ENCODE measurements at regions of chr1 and their contacts with region 1.

Region 1: GRCh38 chr1:27662707-27663393 is 9.1 kb downstream of the IFI6 start:
- DNase-seq: peak; percentile 92
- H3K4me3 ChIP-seq: peak overlapping the region; percentile 54
- H3K27ac ChIP-seq: peak overlapping the region; percentile 85
- H3K4me1 ChIP-seq: peaks cover 54% of the 10 kb centered on the region
- CTCF ChIP-seq: peak; percentile 94

Region 2: DNA sequence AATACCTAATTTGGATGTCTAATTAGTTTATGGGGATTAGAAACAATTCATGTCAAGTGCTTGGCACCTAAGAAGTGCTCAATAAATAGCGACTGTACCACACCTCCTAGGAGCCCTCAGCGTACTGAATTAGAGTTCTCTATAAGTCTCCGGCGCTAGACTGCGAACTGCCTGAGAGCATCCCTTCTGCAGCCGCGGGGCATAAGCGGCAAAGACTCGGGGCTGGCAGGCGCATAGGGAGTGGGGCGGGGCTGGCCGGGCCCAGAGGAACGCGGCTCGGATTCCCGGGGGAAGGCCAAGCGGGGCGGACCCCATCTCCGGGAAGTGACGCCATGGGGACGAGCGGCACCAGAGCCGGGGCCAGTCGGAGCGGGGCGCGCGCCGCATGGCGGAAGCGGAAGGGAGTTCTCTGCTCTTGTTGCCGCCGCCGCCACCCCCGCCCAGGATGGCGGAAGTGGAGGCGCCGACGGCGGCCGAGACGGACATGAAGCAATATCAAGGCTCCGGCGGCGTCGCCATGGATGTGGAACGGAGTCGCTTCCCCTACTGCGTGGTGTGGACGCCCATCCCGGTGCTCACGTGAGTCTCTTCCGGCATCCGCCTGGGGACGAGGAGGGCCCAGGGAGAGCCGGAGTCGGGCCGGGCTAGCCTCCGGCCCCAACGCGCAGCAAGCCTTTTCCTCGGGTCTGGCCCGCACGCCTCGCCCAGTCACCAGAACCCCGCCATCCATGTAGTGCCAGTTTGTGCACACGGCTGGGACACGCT is 340.9 kb before region 1 on chr1 and contains the start of gene TMEM222:
- CTCF ChIA-PET with region 1: no interaction called
- POLR2A ChIA-PET with region 1: interaction called, 8 read pairs
- intact Hi-C with region 1: loop called (anchors 10 kb)
- DNase-seq: peak; percentile 98
- H3K4me3 ChIP-seq: peak within 1 kb of the TSS; percentile 98
- H3K27ac ChIP-seq: peak within 1 kb of the TSS; percentile 75
- H3K4me1 ChIP-seq: peaks cover 10% of the 10 kb centered on the region
- CTCF ChIP-seq: no peak
- total RNA-seq, gene TMEM222: 32.8 and 43.4 TPM in 2 replicates

Region 3: DNA sequence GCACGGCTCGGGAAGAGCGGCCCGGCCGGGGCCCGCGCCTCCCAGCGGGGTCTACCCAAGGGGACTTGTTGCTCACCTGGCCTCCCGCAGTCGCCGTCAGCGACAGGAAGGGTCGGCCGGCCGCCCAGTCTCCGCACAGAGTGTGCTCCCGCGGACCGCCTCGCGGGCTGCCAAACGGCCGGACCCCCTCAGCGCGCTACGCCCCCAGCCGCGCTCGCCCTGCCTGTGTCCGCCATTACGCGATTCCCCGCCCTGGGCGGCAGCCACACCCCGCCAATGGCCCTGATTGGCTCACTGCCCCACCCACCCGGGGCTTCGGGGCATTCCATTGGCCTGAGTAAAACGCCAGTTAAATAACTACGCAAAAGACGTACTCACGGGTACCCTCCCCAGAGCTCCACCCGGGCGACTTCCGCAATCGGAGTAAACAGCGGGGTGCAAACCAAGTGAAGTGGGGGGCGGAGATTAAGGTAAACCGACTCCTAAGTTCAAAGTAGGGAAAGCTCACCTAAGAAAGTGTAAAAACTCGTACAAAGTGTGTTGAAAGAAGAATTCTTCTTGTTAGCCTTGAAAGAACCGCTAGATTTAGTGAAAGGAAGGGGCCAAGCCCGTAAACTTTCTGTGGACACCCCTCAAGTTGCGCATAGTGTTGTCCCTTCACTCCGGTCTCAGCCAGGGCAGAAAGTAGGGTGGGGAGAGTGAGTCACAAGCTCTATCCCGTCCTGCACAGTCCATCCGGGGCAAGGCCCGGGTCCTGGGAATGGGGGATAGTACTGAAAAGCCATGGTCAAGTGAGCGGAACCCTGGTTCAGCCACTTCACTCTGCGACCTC is 172.7 kb before region 1 on chr1 and contains the start of gene WASF2:
- CTCF ChIA-PET with region 1: no interaction called
- POLR2A ChIA-PET with region 1: no interaction called
- intact Hi-C with region 1: no loop called
- DNase-seq: peak; percentile 100
- H3K4me3 ChIP-seq: peak within 1 kb of the TSS; percentile 95
- H3K27ac ChIP-seq: peak within 1 kb of the TSS; percentile 76
- H3K4me1 ChIP-seq: peaks cover 46% of the 10 kb centered on the region
- CTCF ChIP-seq: no peak
- total RNA-seq, gene WASF2: 25.1 and 26.9 TPM in 2 replicates

Region 4: DNA sequence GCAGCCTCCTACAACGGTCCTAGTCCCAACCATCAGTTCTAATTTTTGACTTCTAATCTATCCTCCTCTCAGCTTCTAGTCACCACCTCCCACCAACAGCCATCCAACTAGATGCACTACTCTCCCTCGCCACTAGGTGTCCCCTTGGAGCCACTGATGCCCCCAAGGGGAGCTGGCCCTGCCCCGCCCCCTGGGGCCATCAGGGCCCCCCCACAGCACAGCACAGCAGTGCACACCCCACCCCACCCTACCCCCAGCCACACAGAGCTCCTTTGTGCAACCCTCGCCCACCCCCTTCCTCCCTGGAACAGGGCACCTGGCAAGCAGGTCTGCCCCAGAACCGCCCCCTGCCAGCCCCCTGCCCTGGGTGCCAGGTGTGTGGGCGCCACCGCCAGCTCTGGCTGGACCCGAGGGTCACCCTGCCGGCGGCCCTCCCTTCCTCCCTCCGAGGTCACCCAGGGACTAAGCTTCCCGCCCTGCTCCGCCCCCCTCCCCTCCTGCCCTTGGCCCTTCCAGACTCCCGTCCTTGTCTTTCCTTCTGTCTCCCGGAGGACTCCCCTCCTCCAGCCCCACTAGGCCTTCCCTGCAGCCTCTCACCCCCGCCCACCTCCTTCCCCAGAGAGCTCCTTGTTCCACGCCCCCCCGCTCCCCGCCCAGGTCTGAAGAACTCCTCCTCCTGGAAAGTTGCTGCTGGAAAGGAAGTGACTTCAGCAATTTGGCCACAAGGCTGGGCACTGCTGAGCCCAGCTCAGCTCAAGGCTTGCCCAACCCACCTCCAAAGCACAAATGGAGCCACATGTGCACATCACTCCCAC is 105.9 kb before region 1 on chr1:
- CTCF ChIA-PET with region 1: interaction called, 3 read pairs
- POLR2A ChIA-PET with region 1: no interaction called
- intact Hi-C with region 1: loop called (anchors 2 kb)
- DNase-seq: peak; percentile 77
- H3K4me3 ChIP-seq: peak overlapping the region; percentile 24
- H3K27ac ChIP-seq: peak overlapping the region; percentile 67
- H3K4me1 ChIP-seq: peaks cover 32% of the 10 kb centered on the region
- CTCF ChIP-seq: peak; percentile 89

Region 5: DNA sequence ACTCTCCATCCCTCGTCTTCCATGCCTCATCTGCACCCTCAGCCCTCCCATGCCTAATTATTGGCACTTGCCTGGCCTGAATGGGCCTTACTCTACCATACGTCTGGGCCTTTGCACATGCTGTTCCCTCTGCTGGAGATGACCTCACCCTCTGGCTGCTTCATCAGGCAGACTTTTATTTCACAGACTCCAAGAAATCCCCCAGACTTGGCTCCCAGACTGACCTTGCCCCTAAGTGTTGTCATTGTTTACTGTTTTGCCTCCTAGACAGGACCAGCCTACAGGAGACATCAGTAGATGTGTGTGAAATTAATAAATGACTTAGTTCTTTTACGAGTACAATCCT is 53.7 kb before region 1 on chr1:
- CTCF ChIA-PET with region 1: interaction called, 26 read pairs
- POLR2A ChIA-PET with region 1: interaction called, 34 read pairs
- intact Hi-C with region 1: loop called (anchors 1 kb)
- DNase-seq: no peak
- H3K4me3 ChIP-seq: peak overlapping the region; percentile 41
- H3K27ac ChIP-seq: peak overlapping the region; percentile 84
- H3K4me1 ChIP-seq: peaks cover 67% of the 10 kb centered on the region
- CTCF ChIP-seq: no peak

Region 6: DNA sequence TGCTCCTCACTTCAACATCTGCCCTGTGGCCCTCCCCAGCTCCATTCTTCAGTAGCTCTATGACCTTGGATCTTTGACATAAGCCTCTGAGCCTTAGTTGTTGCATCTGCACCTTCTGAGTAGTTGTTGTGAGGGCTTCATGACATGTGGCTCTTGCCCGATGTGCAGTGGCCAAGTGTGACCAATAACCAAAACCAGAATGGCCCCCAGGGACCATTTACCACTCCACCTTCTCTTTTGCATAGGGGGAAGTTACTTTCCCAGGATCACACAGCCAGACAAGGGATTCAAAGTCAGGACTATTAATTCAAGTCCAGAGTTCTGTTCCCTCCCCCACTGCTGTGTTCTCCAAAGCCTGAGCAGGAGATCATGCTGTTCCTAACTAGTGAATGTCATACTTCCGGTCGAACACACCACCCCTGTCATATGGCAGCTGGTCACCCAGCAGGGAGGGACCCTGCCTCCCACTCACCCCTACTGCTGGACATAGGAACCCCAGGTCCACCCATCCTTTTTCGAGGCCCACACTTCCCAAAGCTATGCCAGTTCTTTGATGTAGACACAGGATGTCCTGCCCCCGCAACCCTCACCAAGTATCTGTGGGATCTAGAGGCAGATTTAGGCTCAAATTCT is 31.9 kb before region 1 on chr1:
- CTCF ChIA-PET with region 1: no interaction called
- POLR2A ChIA-PET with region 1: interaction called, 7 read pairs
- intact Hi-C with region 1: loop called (anchors 2 kb)
- DNase-seq: no peak
- H3K4me3 ChIP-seq: peak overlapping the region; percentile 23
- H3K27ac ChIP-seq: peak overlapping the region; percentile 51
- H3K4me1 ChIP-seq: peaks cover 74% of the 10 kb centered on the region
- CTCF ChIP-seq: no peak